H1 (cell line): ENCODE measurements at regions of chr6 and their contacts with region 1.

Region 1: DNA sequence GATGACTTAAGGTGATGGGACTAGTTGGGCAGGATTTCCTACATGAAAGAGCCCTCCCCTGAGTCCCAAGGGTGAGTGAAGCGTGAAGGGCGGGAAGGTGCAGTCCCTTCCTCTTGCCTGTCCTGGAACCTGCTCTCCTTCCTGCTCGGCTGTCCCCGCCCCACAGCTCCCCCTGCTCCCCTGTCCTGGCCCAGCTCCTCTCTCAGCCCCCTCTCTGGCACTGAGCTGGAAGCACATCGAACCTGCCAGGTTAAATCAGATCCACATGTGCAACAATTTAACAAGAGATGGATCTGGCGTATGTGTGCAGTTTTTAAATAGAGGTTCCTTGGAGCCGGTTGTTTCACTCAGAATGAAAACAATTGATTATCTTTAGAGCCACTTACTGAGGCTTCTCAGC is 95.0 kb downstream of the LRFN2 start:
- DNase-seq: peak in 1 of 2 experiments; percentile 56
- H3K4me3 ChIP-seq: no peak overlapping the region
- H3K27ac ChIP-seq: no peak overlapping the region
- H3K4me1 ChIP-seq: peaks cover 0 to 2% (median under 1%) of the 10 kb centered on the region in 4 experiments; a peak in 2 of 7 replicates
- H3K27me3 ChIP-seq: no peaks in the 10 kb centered on the region; a peak in 1 of 7 replicates
- CTCF ChIP-seq: peak in 2 of 3 experiments; percentile 3 to 9; a peak in 2 of 4 replicates
- EP300 ChIP-seq: no peak
- POLR2A ChIP-seq: no peak
- RAD21 ChIP-seq: peak in 1 of 2 experiments; percentile 34; a peak in 2 of 4 replicates

Region 2: DNA sequence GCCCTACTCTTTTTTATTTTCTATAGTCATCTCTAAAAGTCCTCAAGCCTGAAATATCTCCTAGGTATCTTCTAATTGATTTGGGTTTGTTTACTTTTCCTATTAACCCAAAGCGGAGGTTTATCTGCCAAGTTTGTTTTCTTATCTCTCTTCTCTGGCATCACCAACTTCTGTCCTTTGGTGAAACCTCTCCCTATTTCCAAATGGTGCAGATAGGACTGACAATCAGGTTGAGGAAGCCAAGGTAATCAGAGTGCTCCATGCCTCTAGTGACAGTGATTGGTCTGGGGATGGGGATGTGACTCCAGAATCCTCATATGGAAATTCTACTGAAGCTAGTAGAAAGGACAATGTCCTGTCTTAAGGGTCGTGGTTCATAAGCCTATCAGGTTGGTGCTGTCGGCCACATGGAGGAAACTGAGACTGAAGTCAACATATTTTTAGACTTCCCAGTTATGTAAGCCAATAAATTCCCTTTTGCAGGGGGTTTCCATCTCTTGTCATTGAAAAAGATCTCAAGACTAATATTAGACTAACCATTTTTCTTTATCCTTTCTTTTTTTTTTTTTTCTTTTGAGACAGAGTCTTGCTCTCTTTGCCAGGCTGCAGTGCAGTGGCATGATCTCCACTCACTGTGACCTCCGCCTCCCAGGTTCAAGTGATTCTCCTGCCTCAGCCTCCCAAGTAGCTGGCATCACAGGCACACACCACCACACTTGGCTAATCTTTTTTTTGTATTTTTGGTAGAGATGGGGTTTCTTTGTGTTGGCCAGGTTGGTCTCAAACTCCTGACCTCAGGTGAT is 795.0 kb before region 1 on chr6:
- CTCF ChIA-PET with region 1: no interaction called
- POLR2A ChIA-PET with region 1: no interaction called
- DNase-seq: no peak
- H3K4me3 ChIP-seq: no peak overlapping the region
- H3K27ac ChIP-seq: no peak overlapping the region
- H3K4me1 ChIP-seq: peaks cover 0 to 4% (median 0%) of the 10 kb centered on the region in 4 experiments; a peak in 1 of 7 replicates
- H3K27me3 ChIP-seq: no peaks in the 10 kb centered on the region
- CTCF ChIP-seq: no peak
- EP300 ChIP-seq: no peak
- POLR2A ChIP-seq: no peak
- RAD21 ChIP-seq: no peak

Region 3: GRCh38 chr6:40460380-40460779 is 31.8 kb before region 1 on chr6:
- CTCF ChIA-PET with region 1: no interaction called
- POLR2A ChIA-PET with region 1: no interaction called
- DNase-seq: no peak
- H3K4me3 ChIP-seq: no peak overlapping the region
- H3K27ac ChIP-seq: no peak overlapping the region
- H3K4me1 ChIP-seq: no peaks in the 10 kb centered on the region
- H3K27me3 ChIP-seq: no peaks in the 10 kb centered on the region
- CTCF ChIP-seq: no peak
- EP300 ChIP-seq: no peak
- POLR2A ChIP-seq: no peak
- RAD21 ChIP-seq: no peak

Region 4: DNA sequence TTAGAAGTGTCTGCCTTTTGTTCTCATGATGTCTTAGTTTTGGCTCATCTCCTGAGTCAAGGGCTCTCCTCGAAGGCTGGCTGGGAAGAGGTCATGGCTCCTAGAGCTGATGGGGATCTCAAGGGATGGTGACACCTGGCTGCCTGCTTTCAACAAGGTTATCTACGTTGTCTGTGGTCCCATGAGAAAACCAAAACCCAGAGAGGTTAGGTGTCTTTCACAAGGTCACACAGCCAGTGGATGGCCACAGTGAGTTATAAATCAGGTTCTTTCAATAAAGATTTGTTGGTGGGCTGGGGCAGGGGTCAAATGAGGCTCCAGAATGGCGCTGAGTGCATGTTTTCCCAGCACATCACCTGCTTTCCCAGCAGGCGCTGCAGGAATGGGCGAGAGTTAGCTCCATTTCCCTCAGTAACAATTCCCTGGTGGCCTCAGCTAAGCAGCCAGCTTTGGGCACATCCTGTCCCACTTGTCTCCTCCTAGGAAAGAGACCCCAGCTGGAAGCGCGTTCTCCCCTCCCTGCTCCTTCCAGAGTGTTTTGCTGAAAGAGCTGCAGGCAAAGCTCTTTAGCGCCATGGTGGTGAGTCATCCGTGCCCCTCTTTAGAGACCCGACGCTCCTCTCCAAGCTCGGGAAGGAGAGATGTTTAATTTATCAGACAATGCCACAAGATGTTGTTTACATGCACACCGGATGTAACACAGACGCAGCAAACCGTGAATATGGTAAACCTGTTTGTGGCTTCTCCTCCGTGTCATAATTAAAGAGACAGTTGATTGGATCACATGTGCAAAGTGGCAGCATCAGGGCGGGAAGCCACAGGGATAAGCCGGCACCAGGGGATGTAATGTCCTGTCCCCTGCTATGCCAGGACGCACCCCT is 14.7 kb before region 1 on chr6:
- CTCF ChIA-PET with region 1: interaction called, 13 read pairs
- POLR2A ChIA-PET with region 1: no interaction called
- DNase-seq: peak in 1 of 2 experiments; percentile 25
- H3K4me3 ChIP-seq: no peak overlapping the region
- H3K27ac ChIP-seq: no peak overlapping the region
- H3K4me1 ChIP-seq: peaks cover 0 to 11% (median 9%) of the 10 kb centered on the region in 4 experiments; a peak in 6 of 7 replicates
- H3K27me3 ChIP-seq: no peaks in the 10 kb centered on the region; a peak in 4 of 7 replicates
- CTCF ChIP-seq: peak in 2 of 3 experiments; percentile 7 to 13; a peak in 2 of 4 replicates
- EP300 ChIP-seq: no peak
- POLR2A ChIP-seq: no peak
- RAD21 ChIP-seq: peak; percentile 21 to 36; a peak in 3 of 4 replicates